Endothelial cell of umbilical vein (primary cell): ENCODE measurements at regions of chr4 and their contacts with region 1.

Region 1: GRCh38 chr4:158253350-158253980 is 43.2 kb downstream of the TMEM144 start:
- DNase-seq: peak; percentile 71
- H3K4me3 ChIP-seq: no peak overlapping the region
- H3K27ac ChIP-seq: no peak overlapping the region
- H3K4me1 ChIP-seq: no peaks in the 10 kb centered on the region
- H3K27me3 ChIP-seq: no peaks in the 10 kb centered on the region
- CTCF ChIP-seq: peak; percentile 60
- POLR2A ChIP-seq: no peak

Region 2: GRCh38 chr4:158193171-158193749 is 60.2 kb before region 1 on chr4:
- CTCF ChIA-PET with region 1: interaction called, 41 read pairs
- POLR2A ChIA-PET with region 1: no interaction called
- dilution Hi-C with region 1: no loop called
- intact Hi-C with region 1: loop called (anchors 1 kb)
- DNase-seq: peak; percentile 58
- H3K4me3 ChIP-seq: no peak overlapping the region
- H3K27ac ChIP-seq: no peak overlapping the region
- H3K4me1 ChIP-seq: no peaks in the 10 kb centered on the region
- H3K27me3 ChIP-seq: no peaks in the 10 kb centered on the region
- CTCF ChIP-seq: peak; percentile 38 to 40
- POLR2A ChIP-seq: no peak

Region 3: GRCh38 chr4:158630893-158631292 is 377.4 kb after region 1 on chr4:
- CTCF ChIA-PET with region 1: interaction called, 74 read pairs
- POLR2A ChIA-PET with region 1: no interaction called
- dilution Hi-C with region 1: no loop called
- intact Hi-C with region 1: no loop called
- DNase-seq: peak; percentile 62
- H3K4me3 ChIP-seq: no peak overlapping the region
- H3K27ac ChIP-seq: no peak overlapping the region
- H3K4me1 ChIP-seq: no peaks in the 10 kb centered on the region
- H3K27me3 ChIP-seq: no peaks in the 10 kb centered on the region
- CTCF ChIP-seq: no peak
- POLR2A ChIP-seq: no peak